A673 (cell line): ENCODE measurements at regions of chr17 and their contacts with region 1.

Region 1: DNA sequence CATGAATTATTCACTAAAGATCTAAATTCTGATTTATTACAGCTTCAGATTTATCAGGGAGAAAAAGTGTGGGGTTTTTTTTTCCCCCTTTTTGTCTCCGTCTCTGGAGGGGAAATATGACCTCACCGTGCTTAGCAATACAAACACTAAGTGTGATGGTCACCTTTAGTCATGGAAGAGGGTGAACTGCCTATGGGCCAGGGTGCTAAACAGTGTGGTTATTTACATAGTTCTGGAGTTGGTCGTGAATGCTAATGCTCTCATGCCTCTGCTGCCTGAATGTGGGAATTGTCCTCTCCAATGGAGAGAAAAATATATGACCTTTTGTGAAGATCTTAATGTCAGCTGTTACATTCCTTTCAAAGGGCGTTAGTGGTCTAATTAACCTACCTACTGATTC is 44.8 kb upstream of the MSI2 start:
- DNase-seq: no peak
- H3K4me3 ChIP-seq: no peak overlapping the region
- H3K27ac ChIP-seq: no peak overlapping the region
- H3K4me1 ChIP-seq: no peaks in the 10 kb centered on the region
- H3K27me3 ChIP-seq: no peaks in the 10 kb centered on the region
- CTCF ChIP-seq: no peak

Region 2: GRCh38 chr17:56867948-56868376 is 343.6 kb before region 1 on chr17:
- CTCF ChIA-PET with region 1: no interaction called
- POLR2A ChIA-PET with region 1: interaction called, 14 read pairs
- intact Hi-C with region 1: no loop called
- DNase-seq: no peak
- H3K4me3 ChIP-seq: no peak overlapping the region
- H3K27ac ChIP-seq: no peak overlapping the region
- H3K4me1 ChIP-seq: no peaks in the 10 kb centered on the region
- H3K27me3 ChIP-seq: no peaks in the 10 kb centered on the region
- CTCF ChIP-seq: no peak

Region 3: GRCh38 chr17:57045868-57046704 is 165.5 kb before region 1 on chr17:
- CTCF ChIA-PET with region 1: no interaction called
- POLR2A ChIA-PET with region 1: no interaction called
- intact Hi-C with region 1: no loop called
- DNase-seq: no peak
- H3K4me3 ChIP-seq: peak overlapping the region; percentile 26
- H3K27ac ChIP-seq: no peak overlapping the region
- H3K4me1 ChIP-seq: no peaks in the 10 kb centered on the region
- H3K27me3 ChIP-seq: peaks cover 14% of the 10 kb centered on the region
- CTCF ChIP-seq: no peak

Region 4: GRCh38 chr17:57327176-57327970 is 115.8 kb after region 1 on chr17:
- CTCF ChIA-PET with region 1: no interaction called
- POLR2A ChIA-PET with region 1: no interaction called
- intact Hi-C with region 1: no loop called
- DNase-seq: no peak
- H3K4me3 ChIP-seq: no peak overlapping the region
- H3K27ac ChIP-seq: no peak overlapping the region
- H3K4me1 ChIP-seq: peaks cover 13% of the 10 kb centered on the region
- H3K27me3 ChIP-seq: no peaks in the 10 kb centered on the region
- CTCF ChIP-seq: no peak